ENCODE measurements at regions of chr6 and their contacts with region 1.

Region 1: DNA sequence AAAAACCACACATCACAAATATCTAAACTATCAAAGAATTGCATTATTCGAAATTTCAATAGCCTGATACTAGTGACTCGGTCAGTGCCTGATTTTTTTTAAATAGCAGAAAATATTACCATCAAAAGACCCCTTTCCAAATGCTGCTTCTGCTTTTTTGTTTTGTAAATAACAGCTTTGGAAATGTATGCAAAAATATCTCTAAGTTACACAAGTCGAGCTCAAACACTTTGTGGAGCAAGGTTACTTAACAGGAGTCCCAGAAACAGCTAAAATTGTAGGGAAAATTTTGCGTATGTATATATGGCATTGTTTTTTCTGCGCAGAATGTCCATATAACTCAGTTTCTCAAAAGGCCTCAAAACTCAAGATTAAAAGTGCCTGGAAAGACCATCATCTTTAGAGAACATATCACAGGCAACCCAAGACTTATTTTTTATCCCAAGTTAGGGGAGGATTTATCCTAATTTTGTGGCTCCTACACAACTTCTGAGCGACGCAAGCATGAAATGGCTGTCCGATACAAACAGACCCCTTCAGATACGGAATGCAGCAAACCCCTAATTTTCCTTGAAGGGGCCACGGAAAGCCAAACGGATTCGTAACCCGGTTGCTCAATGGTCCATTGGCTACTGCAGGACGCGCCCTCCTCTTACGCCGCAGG is 1.3 kb downstream of the CEP85L start:
- ATAC-seq: peak in 3 of 8 experiments; percentile 9 to 42 (median 22)
- H3K4me3 ChIP-seq: peak overlapping the region; percentile 58 to 98 (median 89)
- H3K27ac ChIP-seq: peak overlapping the region in 1 of 2 donors; percentile 87
- H3K4me1 ChIP-seq: peaks cover 8 to 13% of the 10 kb centered on the region in 2 donors

Region 2: DNA sequence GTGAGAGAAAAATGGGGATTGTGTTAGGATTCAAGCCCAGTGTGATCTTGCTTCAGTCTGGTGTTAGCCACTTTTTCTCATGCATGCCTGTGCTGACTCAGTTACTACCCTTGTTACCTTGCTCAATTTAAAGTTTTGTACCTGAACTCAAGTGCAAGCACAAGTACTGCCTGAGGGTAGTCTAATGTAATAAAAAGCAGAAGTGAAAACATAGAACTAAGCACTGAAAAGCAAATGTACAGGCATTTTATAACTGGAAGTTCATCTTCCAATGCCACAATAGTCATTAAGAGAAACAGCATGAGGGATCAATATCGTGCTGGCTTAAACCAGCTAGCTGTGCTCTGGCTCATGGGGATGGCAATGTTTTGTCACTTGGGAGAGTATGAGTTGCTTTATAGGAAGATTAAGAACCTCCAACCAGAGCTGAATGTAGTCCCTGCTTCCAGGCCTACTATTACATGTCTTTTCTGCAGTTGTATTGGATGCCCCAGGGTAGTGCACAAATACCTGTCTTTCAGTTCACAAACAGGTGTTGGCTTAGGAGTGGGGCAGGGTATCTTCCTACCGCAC is 694.3 kb before region 1 on chr6:
- in situ Hi-C with region 1: no loop called
- ATAC-seq: peak in 4 of 8 experiments; percentile 7 to 54 (median 34)
- H3K4me3 ChIP-seq: no peak overlapping the region
- H3K27ac ChIP-seq: peak overlapping the region; percentile 8 to 28
- H3K4me1 ChIP-seq: peaks cover 31 to 43% of the 10 kb centered on the region in 2 donors

Region 3: DNA sequence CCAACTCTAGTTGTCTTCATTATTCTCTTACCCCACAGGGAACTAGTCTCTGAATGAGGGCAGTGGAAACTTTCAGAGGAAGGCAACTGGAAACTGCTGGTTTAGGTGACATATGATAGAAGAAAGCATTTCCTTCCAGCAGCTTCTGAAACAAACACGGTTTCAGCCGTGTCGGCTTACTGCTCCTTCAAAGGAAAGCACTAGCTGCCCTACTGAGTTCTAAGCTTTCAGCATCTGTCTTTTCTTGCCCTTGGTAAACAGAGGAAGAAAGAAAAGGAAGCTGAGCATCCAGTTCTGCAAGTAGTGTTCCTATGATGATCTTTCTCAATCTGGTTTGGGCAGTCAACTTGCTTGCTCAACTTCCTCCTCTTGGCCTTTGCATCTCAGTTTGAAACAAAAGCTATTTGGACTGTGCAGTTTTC is 118.9 kb after region 1 on chr6:
- in situ Hi-C with region 1: loop called in 1 of 9 experiments (anchors 25 kb)
- ATAC-seq: no peak
- H3K4me3 ChIP-seq: no peak overlapping the region
- H3K27ac ChIP-seq: no peak overlapping the region
- H3K4me1 ChIP-seq: peaks cover 5 to 8% of the 10 kb centered on the region in 2 donors

Region 4: GRCh38 chr6:118776607-118777549 is 126.8 kb after region 1 on chr6:
- in situ Hi-C with region 1: loop called in 2 of 9 experiments (anchors 25 kb)
- ATAC-seq: peak; percentile 47 to 96 (median 72)
- H3K4me3 ChIP-seq: no peak overlapping the region
- H3K27ac ChIP-seq: no peak overlapping the region
- H3K4me1 ChIP-seq: no peaks in the 10 kb centered on the region

Region 5: GRCh38 chr6:118984342-118984741 is 334.3 kb after region 1 on chr6:
- in situ Hi-C with region 1: no loop called
- ATAC-seq: no peak
- H3K4me3 ChIP-seq: no peak overlapping the region
- H3K27ac ChIP-seq: no peak overlapping the region
- H3K4me1 ChIP-seq: peaks cover 0 to 5% of the 10 kb centered on the region in 2 donors

Measured in motor neuron (in vitro differentiated cells).